Activated T-helper 2 cell treated with anti-CD3 and anti-CD28 coated beads, Interferon-gamma antibody, Interleukin-2, Interleukin-4, amounts not matched to agents 10 μg/mL and 5 μg/mL and 100 μg/mL, durations not matched to agents 14 hours and 24 hours and 36 hours (primary cell): ENCODE measurements at regions of chr4 and their contacts with region 1.

Region 1: GRCh38 chr4:127782274-127783025 is at the start of gene HSPA4L:
- DNase-seq: peak; percentile 59
- H3K4me3 Mint-ChIP-seq: peak within 1 kb of the TSS; percentile 88
- H3K27ac Mint-ChIP-seq: peak within 1 kb of the TSS; percentile 80
- H3K4me1 Mint-ChIP-seq: peaks cover 24% of the 10 kb centered on the region
- H3K27me3 Mint-ChIP-seq: peaks cover 62% of the 10 kb centered on the region
- total RNA-seq, gene HSPA4L: 5.0 and 5.2 TPM in 2 replicates

Region 2: DNA sequence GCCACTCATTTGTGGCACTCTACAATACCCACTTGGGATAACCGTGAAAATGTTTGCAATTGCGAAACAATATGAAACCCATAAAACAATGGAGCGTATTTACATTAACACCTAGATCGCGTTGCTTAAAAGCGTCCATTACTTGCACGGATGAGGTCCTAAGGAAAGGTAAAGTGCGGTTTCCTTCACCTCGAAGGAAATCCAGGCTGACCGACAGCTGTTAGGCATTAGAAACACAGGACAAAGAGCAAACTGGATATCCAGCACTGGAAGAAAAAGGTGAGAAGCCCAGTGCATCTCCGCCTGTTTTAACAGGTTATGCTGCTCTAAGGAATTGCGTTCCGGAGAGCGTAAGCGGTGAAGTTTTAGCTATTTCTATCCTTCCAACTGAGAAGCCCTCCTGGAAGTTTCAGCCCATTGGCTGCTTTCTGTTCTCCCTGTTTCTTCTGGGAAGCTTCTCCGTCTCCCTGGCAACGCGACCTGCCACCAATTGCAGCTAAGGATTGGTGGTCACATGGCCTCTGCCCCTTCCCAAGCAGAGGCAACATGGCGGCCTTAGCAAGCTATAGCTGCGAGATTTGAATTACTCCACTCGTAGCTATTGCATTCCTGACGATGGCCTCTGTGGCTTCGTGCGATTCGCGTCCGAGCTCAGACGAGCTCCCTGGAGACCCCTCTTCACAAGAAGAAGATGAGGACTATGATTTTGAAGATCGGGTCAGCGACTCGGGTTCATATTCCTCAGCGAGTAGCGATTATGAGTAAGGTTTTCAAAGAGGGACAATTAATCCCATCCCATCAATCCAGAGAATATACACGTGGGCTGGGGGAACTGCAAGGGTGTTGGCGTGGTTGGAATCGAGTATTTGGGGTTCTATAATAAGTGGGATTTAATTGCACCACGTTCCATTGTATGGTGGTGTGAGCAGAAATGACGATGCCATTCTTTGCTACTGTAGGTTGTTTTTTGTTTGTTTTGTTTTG is 149.7 kb before region 1 on chr4 and contains the start of gene INTU:
- intact Hi-C with region 1: loop called (anchors 10 kb)
- DNase-seq: peak; percentile 13
- H3K4me3 Mint-ChIP-seq: peak within 1 kb of the TSS; percentile 79
- H3K27ac Mint-ChIP-seq: no peak within 1 kb of the TSS
- H3K4me1 Mint-ChIP-seq: peaks cover 12% of the 10 kb centered on the region
- H3K27me3 Mint-ChIP-seq: peaks cover 35% of the 10 kb centered on the region
- total RNA-seq, gene INTU: not detected in 2 replicates

Region 3: DNA sequence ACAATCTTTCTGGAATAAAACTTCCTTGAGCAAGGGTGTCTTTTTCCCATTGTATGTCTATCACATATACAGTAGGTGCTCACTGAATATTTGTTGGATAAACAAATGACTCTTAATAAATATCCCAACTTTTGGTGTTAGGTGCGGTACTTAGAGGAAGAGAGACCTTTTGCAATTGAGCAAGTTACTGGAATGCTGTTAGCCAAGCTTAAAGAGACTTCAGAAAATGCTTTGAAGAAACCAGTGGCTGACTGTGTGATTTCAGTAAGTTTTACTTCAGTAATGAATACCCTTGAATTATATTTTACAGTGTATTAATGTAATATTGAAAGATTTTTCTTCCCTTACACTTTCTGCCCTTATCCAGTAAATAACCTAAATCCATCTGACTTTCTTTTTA is 16.0 kb after region 1 on chr4:
- intact Hi-C with region 1: no loop called
- DNase-seq: no peak
- H3K4me3 Mint-ChIP-seq: no peak overlapping the region
- H3K27ac Mint-ChIP-seq: no peak overlapping the region
- H3K4me1 Mint-ChIP-seq: no peaks in the 10 kb centered on the region
- H3K27me3 Mint-ChIP-seq: peaks cover 22% of the 10 kb centered on the region

Region 4: GRCh38 chr4:127965062-127965802 is 182.8 kb after region 1 on chr4 and contains the starts of genes ABHD18 and MFSD8:
- intact Hi-C with region 1: loop called (anchors 2 kb)
- DNase-seq: peak; percentile 100
- H3K4me3 Mint-ChIP-seq: peak within 1 kb of the TSS; percentile 95
- H3K27ac Mint-ChIP-seq: peak within 1 kb of the TSS; percentile 93
- H3K4me1 Mint-ChIP-seq: peaks cover 26% of the 10 kb centered on the region
- H3K27me3 Mint-ChIP-seq: no peaks in the 10 kb centered on the region
- total RNA-seq, gene ABHD18: 21.0 and 23.9 TPM in 2 replicates
- total RNA-seq, gene MFSD8: 18.7 and 20.2 TPM in 2 replicates

Region 5: GRCh38 chr4:128287871-128288688 is 505.6 kb after region 1 on chr4:
- intact Hi-C with region 1: loop called (anchors 5 kb)
- DNase-seq: peak; percentile 97
- H3K4me3 Mint-ChIP-seq: peak overlapping the region; percentile 95
- H3K27ac Mint-ChIP-seq: peak overlapping the region; percentile 91
- H3K4me1 Mint-ChIP-seq: peaks cover 29% of the 10 kb centered on the region
- H3K27me3 Mint-ChIP-seq: no peaks in the 10 kb centered on the region